Right cardiac atrium (tissue), 5 donors: ENCODE measurements at regions of chr20 and their contacts with region 1.

Region 1: GRCh38 chr20:46022411-46023147 is 6.4 kb upstream of the SLC12A5 start:
- DNase-seq: peak; percentile 45 to 85 (median 82)
- ATAC-seq: peak; percentile 39 to 64
- H3K4me3 ChIP-seq: peak overlapping the region; percentile 1
- H3K27ac ChIP-seq: no peak overlapping the region
- H3K4me1 ChIP-seq: no peaks in the 10 kb centered on the region
- H3K27me3 ChIP-seq: no peaks in the 10 kb centered on the region

Region 2: GRCh38 chr20:46089417-46090388 is 67.1 kb after region 1 on chr20 and contains the start of gene NCOA5:
- intact Hi-C with region 1: loop called in 1 of 4 experiments (anchors 10 kb)
- DNase-seq: peak; percentile 97 to 99 (median 98)
- ATAC-seq: peak; percentile 98 to 99
- H3K4me3 ChIP-seq: peak within 1 kb of the TSS; percentile 79
- H3K27ac ChIP-seq: peak within 1 kb of the TSS; percentile 99
- H3K4me1 ChIP-seq: peaks cover 8% of the 10 kb centered on the region
- H3K27me3 ChIP-seq: no peaks in the 10 kb centered on the region
- total RNA-seq, gene NCOA5: 16.1 to 26.1 (median 21.2) TPM

Region 3: GRCh38 chr20:46349035-46349741 is 326.6 kb after region 1 on chr20:
- intact Hi-C with region 1: loop called in 1 of 4 experiments (anchors 10 kb)
- DNase-seq: peak; percentile 63 to 86 (median 86)
- ATAC-seq: peak; percentile 71 to 78
- H3K4me3 ChIP-seq: no peak overlapping the region
- H3K27ac ChIP-seq: no peak overlapping the region
- H3K4me1 ChIP-seq: peaks cover 2% of the 10 kb centered on the region
- H3K27me3 ChIP-seq: no peaks in the 10 kb centered on the region